Endothelial cell of umbilical vein (primary cell): ENCODE measurements at regions of chr10 and their contacts with region 1.

Region 1: GRCh38 chr10:84264611-84265141 is 19.8 kb downstream of the RGR start:
- DNase-seq: peak; percentile 73
- H3K4me3 ChIP-seq: no peak overlapping the region
- H3K27ac ChIP-seq: no peak overlapping the region
- H3K4me1 ChIP-seq: no peaks in the 10 kb centered on the region
- H3K27me3 ChIP-seq: peaks cover 8 to 11% of the 10 kb centered on the region in 2 experiments
- CTCF ChIP-seq: peak; percentile 89 to 95
- POLR2A ChIP-seq: no peak

Region 2: DNA sequence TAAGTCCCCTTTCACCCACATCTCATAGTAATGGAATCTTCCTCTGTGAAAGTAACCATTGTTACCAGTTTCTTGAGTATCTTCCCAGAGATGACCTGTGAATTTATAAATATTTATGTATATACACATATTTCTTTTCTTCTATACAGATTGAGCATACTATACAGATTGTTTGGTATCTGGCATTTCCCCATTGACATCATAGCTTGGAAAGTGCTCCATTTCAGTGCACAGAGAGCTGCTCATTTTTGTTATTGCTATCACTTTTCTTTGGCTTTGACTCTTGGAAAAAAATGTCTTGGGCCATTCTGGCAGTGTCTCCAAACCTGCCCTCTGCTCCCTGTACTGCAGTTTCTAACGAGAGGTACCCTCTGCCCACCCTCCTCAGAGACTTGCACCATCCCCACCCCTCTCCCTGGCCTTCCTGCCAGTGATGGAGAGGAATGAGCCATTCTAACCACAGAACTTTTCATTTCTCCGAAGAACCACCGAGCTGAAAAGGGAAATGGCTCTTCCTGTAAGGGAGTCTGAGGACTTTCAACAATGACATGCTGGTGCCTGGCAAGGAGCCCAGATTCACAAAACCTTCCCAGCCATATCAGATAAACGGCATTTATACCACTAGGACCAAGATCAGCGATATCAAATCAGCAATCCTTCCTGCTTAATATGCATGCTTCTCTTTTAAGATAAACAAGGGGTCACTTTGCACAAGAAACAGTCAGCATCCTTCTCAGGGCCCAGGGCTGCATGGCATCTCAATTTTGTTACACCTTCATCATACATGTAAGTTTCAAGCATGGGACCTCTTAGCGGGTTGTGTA is 44.0 kb after region 1 on chr10:
- CTCF ChIA-PET with region 1: interaction called, 20 read pairs
- POLR2A ChIA-PET with region 1: no interaction called
- dilution Hi-C with region 1: no loop called
- intact Hi-C with region 1: no loop called
- DNase-seq: peak; percentile 93
- H3K4me3 ChIP-seq: peak overlapping the region in 1 of 3 experiments; percentile 10
- H3K27ac ChIP-seq: peak overlapping the region; percentile 84
- H3K4me1 ChIP-seq: peaks cover 35% of the 10 kb centered on the region
- H3K27me3 ChIP-seq: no peaks in the 10 kb centered on the region
- CTCF ChIP-seq: no peak
- POLR2A ChIP-seq: no peak

Region 3: DNA sequence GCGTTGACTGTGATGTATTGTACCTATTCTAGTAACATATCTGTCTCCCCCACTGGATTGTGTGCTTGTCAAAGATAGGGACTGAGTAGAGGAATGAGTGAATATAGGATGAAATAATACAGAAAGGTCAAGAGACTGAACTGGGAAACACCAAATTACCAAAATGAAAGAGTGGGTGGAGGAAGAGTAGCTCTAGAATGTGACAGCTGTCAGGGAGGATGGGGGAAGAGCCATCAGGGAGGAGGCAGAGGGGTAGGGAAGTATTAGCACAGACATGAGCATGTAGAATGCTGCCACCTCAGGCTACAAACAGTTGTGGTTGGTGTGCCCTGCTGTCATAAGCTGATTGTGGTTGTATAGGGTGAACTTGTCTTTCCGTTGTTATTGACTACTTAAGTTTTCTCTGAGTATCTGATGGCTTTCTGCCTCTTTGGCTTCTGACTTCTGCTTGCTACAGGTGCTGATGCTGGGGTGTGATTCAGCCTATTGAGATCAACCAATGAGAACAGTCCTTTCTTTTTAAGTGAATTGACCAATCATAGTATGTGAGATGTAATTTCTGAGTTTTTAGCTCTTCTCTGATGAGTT is 69.3 kb after region 1 on chr10:
- CTCF ChIA-PET with region 1: interaction called, 40 read pairs
- POLR2A ChIA-PET with region 1: no interaction called
- dilution Hi-C with region 1: no loop called
- intact Hi-C with region 1: loop called (anchors 1 kb)
- DNase-seq: no peak
- H3K4me3 ChIP-seq: no peak overlapping the region
- H3K27ac ChIP-seq: no peak overlapping the region
- H3K4me1 ChIP-seq: peaks cover 12% of the 10 kb centered on the region
- H3K27me3 ChIP-seq: no peaks in the 10 kb centered on the region
- CTCF ChIP-seq: no peak
- POLR2A ChIP-seq: no peak

Region 4: GRCh38 chr10:84360637-84361365 is 96.1 kb after region 1 on chr10:
- CTCF ChIA-PET with region 1: interaction called, 12 read pairs
- POLR2A ChIA-PET with region 1: no interaction called
- dilution Hi-C with region 1: no loop called
- intact Hi-C with region 1: no loop called
- DNase-seq: peak; percentile 67
- H3K4me3 ChIP-seq: peak overlapping the region; percentile 2 to 54 (median 28)
- H3K27ac ChIP-seq: no peak overlapping the region
- H3K4me1 ChIP-seq: peaks cover 6% of the 10 kb centered on the region
- H3K27me3 ChIP-seq: no peaks in the 10 kb centered on the region
- CTCF ChIP-seq: no peak
- POLR2A ChIP-seq: no peak

Region 5: DNA sequence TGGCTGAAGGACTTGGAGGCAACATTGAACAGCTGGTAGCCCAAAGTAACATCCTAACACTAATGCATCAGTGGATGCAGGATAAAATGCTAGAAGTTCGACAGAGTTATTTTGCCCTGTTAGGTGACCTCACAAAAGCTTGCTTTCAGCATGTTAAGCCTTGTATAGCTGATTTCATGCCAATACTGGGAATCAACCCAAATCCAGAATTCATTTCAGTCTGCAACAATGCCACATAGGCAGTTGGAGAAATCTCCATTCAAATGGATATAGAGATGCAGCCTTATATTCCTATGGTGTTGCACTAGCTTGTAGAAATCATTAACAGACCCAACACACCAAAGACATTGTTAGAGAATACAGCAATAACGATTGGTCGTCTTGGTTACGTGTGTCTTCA is 126.7 kb after region 1 on chr10:
- CTCF ChIA-PET with region 1: no interaction called
- POLR2A ChIA-PET with region 1: no interaction called
- dilution Hi-C with region 1: no loop called
- intact Hi-C with region 1: no loop called
- DNase-seq: no peak
- H3K4me3 ChIP-seq: no peak overlapping the region
- H3K27ac ChIP-seq: no peak overlapping the region
- H3K4me1 ChIP-seq: no peaks in the 10 kb centered on the region
- H3K27me3 ChIP-seq: no peaks in the 10 kb centered on the region
- CTCF ChIP-seq: no peak
- POLR2A ChIP-seq: no peak

Region 6: DNA sequence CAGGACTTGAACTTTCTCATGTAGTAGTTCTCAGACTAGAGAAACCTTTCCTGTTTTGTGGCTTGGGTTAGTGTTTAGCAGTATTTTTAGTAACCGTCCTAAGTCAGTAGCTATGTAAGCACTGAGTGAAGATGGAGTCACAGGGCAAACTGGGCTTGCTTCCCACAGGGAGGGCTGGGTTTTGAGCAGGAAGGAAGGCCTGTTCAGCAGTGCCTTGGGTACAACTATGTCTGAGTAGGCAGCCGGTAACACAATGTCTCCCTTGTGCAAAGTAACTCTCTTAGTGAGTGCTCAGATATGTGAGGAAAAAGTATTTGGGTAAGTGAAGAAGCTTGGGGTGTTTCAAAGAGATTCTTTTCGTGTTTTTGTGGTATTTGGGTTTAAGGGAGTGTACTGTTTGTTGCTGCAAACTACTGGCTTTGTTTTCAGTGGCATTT is 160.1 kb after region 1 on chr10:
- CTCF ChIA-PET with region 1: interaction called, 16 read pairs
- POLR2A ChIA-PET with region 1: no interaction called
- dilution Hi-C with region 1: no loop called
- intact Hi-C with region 1: no loop called
- DNase-seq: peak; percentile 96
- H3K4me3 ChIP-seq: peak overlapping the region in 2 of 3 experiments; percentile 5 to 64
- H3K27ac ChIP-seq: peak overlapping the region; percentile 69
- H3K4me1 ChIP-seq: peaks cover 15% of the 10 kb centered on the region
- H3K27me3 ChIP-seq: no peaks in the 10 kb centered on the region
- CTCF ChIP-seq: no peak
- POLR2A ChIP-seq: peak; percentile 72

Region 7: GRCh38 chr10:84531396-84531795 is 266.7 kb after region 1 on chr10:
- CTCF ChIA-PET with region 1: interaction called, 510 read pairs
- POLR2A ChIA-PET with region 1: no interaction called
- dilution Hi-C with region 1: no loop called
- intact Hi-C with region 1: no loop called
- DNase-seq: peak; percentile 60
- H3K4me3 ChIP-seq: no peak overlapping the region
- H3K27ac ChIP-seq: peak overlapping the region; percentile 5
- H3K4me1 ChIP-seq: no peaks in the 10 kb centered on the region
- H3K27me3 ChIP-seq: no peaks in the 10 kb centered on the region
- CTCF ChIP-seq: no peak
- POLR2A ChIP-seq: no peak